Mammary epithelial cell (primary cell): ENCODE measurements at regions of chr16 and their contacts with region 1.

Region 1: DNA sequence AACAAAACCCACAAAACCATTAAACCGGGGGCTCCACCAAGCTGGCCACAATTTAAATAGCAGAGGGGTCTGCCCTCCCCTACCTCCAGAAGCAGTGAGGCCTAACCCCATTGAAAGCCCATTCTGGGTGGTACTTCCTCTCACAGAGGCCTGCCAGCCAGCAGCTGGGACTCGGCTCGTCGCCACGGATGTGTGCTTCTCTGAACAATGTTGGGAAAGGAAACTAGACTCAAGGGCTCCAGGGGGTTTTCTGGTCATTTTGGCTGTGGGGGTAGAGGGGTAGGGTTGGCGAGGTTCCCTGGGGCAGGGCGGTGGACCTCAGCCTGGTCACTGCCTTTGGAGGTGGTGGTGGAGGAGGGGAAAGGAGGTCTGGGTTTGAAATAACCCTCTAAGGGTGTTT is 4.7 kb upstream of the PLCG2 start:
- DNase-seq: no peak
- H3K4me3 ChIP-seq: no peak overlapping the region
- H3K27ac ChIP-seq: no peak overlapping the region
- H3K4me1 ChIP-seq: peaks cover under 1% of the 10 kb centered on the region
- H3K27me3 ChIP-seq: no peaks in the 10 kb centered on the region
- CTCF ChIP-seq: no peak

Region 2: GRCh38 chr16:81737885-81738786 is 36.2 kb before region 1 on chr16:
- CTCF ChIA-PET with region 1: no interaction called
- dilution Hi-C with region 1: no loop called
- in situ Hi-C with region 1: no loop called
- intact Hi-C with region 1: no loop called
- DNase-seq: peak; percentile 88
- H3K4me3 ChIP-seq: peak overlapping the region in 1 of 3 experiments; percentile 18
- H3K27ac ChIP-seq: no peak overlapping the region
- H3K4me1 ChIP-seq: peaks cover 3% of the 10 kb centered on the region
- H3K27me3 ChIP-seq: no peaks in the 10 kb centered on the region
- CTCF ChIP-seq: peak; percentile 81 to 83

Region 3: GRCh38 chr16:81817789-81818567 is 43.6 kb after region 1 on chr16:
- CTCF ChIA-PET with region 1: no interaction called
- dilution Hi-C with region 1: loop called (anchors 5 kb)
- in situ Hi-C with region 1: no loop called
- intact Hi-C with region 1: no loop called
- DNase-seq: no peak
- H3K4me3 ChIP-seq: no peak overlapping the region
- H3K27ac ChIP-seq: no peak overlapping the region
- H3K4me1 ChIP-seq: no peaks in the 10 kb centered on the region
- H3K27me3 ChIP-seq: no peaks in the 10 kb centered on the region
- CTCF ChIP-seq: no peak